ENCODE measurements at regions of chr3 and their contacts with region 1.

Region 1: DNA sequence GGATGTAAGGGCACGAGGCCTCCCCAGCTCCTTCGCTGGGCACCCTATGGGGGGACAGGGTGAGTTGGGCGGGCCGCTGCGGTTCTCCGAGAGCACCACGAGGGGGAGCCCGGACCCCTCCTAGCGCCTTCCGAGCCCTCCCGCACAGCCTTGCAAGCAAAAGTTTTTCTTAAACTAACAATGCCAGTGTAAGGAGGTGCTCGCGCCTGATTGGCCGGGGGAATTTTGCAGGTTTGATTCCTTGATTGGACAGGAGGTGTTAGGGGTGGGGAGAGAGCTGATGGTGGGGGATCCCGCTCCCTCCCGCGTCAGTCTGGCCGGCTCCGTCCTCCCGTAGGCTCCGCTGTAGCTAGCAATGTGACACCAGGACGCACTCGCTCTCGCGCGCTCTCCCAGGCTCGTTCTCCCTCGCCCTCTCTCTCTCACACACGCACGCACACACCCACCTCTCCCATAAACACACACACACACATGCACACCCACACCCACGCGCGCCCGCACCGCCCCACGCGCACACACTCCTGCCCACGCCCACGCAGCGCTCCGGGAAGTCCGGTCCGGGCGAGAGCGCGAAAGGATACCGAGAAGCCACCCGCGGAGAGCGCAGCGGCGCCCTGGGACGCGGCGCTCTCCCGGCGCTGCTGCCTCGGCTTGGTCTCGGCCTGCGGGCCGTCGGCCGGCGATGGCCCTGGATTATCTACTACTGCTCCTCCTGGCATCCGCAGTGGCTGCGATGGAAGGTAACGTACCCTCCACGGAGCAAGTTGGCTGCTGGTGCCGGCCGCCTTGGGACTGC is at the start of gene EPHB1:
- DNase-seq: peak; percentile 95
- H3K4me3 ChIP-seq: peak within 1 kb of the TSS; percentile 46
- H3K27ac ChIP-seq: no peak within 1 kb of the TSS
- H3K4me1 ChIP-seq: peaks cover 9% of the 10 kb centered on the region
- H3K27me3 ChIP-seq: peaks cover 52% of the 10 kb centered on the region
- CTCF ChIP-seq: peak; percentile 93
- total RNA-seq, gene EPHB1: 0.11 and 0.61 TPM in 2 replicates

Region 2: GRCh38 chr3:134838599-134838998 is 43.5 kb after region 1 on chr3:
- CTCF ChIA-PET with region 1: interaction called, 5 read pairs
- POLR2A ChIA-PET with region 1: interaction called, 19 read pairs
- intact Hi-C with region 1: no loop called
- DNase-seq: no peak
- H3K4me3 ChIP-seq: no peak overlapping the region
- H3K27ac ChIP-seq: no peak overlapping the region
- H3K4me1 ChIP-seq: no peaks in the 10 kb centered on the region
- H3K27me3 ChIP-seq: peaks cover 6% of the 10 kb centered on the region
- CTCF ChIP-seq: peak; percentile 47; the same call in 1 of the 2 replicates

Region 3: GRCh38 chr3:135503760-135504686 is 708.9 kb after region 1 on chr3:
- CTCF ChIA-PET with region 1: interaction called, 12 read pairs
- POLR2A ChIA-PET with region 1: no interaction called
- intact Hi-C with region 1: loop called (anchors 2 kb)
- DNase-seq: peak; percentile 75
- H3K4me3 ChIP-seq: no peak overlapping the region
- H3K27ac ChIP-seq: no peak overlapping the region
- H3K4me1 ChIP-seq: no peaks in the 10 kb centered on the region
- H3K27me3 ChIP-seq: peaks cover 85% of the 10 kb centered on the region
- CTCF ChIP-seq: peak; percentile 80

Region 4: GRCh38 chr3:135895106-135895733 is 1100.1 kb after region 1 on chr3:
- CTCF ChIA-PET with region 1: no interaction called
- POLR2A ChIA-PET with region 1: no interaction called
- intact Hi-C with region 1: loop called (anchors 1 kb)
- DNase-seq: peak; percentile 78
- H3K4me3 ChIP-seq: no peak overlapping the region
- H3K27ac ChIP-seq: no peak overlapping the region
- H3K4me1 ChIP-seq: no peaks in the 10 kb centered on the region
- H3K27me3 ChIP-seq: peaks cover 23% of the 10 kb centered on the region
- CTCF ChIP-seq: peak; percentile 90